ENCODE measurements at regions of chr1 and their contacts with region 1.

Region 1: GRCh38 chr1:158752155-158752712 is 2.3 kb upstream of the OR6K6 start:
- DNase-seq: no peak
- H3K4me3 ChIP-seq: no peak overlapping the region
- H3K4me3 Mint-ChIP-seq: no peak overlapping the region
- H3K27ac Mint-ChIP-seq: no peak overlapping the region
- H3K4me1 ChIP-seq: no peaks in the 10 kb centered on the region
- H3K4me1 Mint-ChIP-seq: no peaks in the 10 kb centered on the region
- H3K27me3 ChIP-seq: no peaks in the 10 kb centered on the region
- H3K27me3 Mint-ChIP-seq: peaks cover 3% of the 10 kb centered on the region
- CTCF ChIP-seq: no peak

Region 2: DNA sequence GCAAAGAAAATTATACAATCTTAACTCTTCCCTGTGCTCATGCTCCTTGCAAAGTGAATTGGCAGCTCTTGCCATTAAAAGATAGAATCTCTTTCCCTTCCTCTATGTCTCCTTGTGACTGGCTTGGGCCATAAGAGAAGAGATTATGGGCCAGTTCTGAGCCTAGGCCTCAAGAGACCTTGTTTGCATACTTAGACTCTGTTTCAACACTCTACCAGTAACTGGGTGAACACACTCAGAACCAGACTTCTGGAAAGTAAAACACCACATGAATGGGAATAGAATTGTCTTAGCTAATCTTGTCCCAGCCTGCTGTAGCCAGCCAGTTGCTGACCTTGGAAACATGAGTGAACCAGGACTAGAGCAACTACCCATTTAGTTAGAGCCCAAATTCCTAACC is 16.4 kb before region 1 on chr1:
- CTCF ChIA-PET with region 1: no interaction called
- POLR2A ChIA-PET with region 1: no interaction called
- intact Hi-C with region 1: no loop called
- DNase-seq: no peak
- H3K4me3 ChIP-seq: no peak overlapping the region
- H3K4me3 Mint-ChIP-seq: no peak overlapping the region
- H3K27ac Mint-ChIP-seq: no peak overlapping the region
- H3K4me1 ChIP-seq: peaks cover 11% of the 10 kb centered on the region
- H3K4me1 Mint-ChIP-seq: peaks cover 8% of the 10 kb centered on the region
- H3K27me3 ChIP-seq: no peaks in the 10 kb centered on the region
- H3K27me3 Mint-ChIP-seq: no peaks in the 10 kb centered on the region
- CTCF ChIP-seq: no peak

Region 3: DNA sequence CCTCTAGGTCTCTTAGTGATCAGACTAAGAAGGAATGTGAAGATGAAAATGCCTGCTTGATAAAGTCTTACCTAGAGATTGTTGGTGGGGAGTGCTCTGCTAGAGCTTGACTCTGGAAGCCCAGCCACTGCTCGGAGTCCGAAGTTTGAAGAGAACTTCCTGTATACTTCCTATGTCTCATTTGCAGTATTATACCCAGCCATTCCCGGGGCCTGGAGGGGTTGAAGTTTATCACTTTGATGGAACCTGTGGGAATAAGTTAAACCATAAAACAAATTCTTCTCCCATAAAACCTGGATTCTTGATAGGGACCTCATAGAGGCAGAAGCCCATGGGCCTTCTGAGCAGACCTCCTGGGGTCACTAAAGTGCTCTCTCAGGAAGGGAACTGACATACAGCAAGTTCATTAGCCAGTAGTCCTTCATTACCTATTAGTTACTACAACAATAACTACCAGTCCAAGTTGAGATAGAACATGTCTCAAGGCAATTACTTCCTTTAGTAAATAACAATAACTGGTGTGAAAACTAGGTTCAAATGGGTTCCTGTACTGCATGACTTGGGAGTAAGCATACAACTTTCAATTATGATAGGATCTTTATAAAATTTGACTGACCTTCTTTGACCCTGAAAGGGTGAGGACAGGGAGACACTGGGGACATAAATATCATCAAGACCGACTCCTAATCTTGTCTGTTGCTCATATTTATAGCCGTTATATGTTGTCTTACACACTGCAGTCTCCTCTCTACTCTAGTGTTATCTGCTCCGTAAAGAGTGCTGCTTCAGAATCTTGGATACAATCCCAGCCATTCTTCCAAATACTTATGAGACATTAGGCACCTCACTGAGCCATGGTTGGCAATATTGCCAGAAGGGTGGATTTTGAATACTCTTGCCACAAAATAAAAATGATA is 20.0 kb after region 1 on chr1 and contains the start of gene OR6N1:
- CTCF ChIA-PET with region 1: no interaction called
- POLR2A ChIA-PET with region 1: no interaction called
- intact Hi-C with region 1: loop called (anchors 1 kb)
- DNase-seq: no peak
- H3K4me3 ChIP-seq: no peak within 1 kb of the TSS
- H3K4me3 Mint-ChIP-seq: no peak within 1 kb of the TSS
- H3K27ac Mint-ChIP-seq: no peak within 1 kb of the TSS
- H3K4me1 ChIP-seq: no peaks in the 10 kb centered on the region
- H3K4me1 Mint-ChIP-seq: no peaks in the 10 kb centered on the region
- H3K27me3 ChIP-seq: no peaks in the 10 kb centered on the region
- H3K27me3 Mint-ChIP-seq: peaks cover 7% of the 10 kb centered on the region
- CTCF ChIP-seq: no peak
- total RNA-seq, gene OR6N1: not detected in 2 replicates

Measured in Caco-2 (cell line).